ENCODE measurements at regions of chr13 and their contacts with region 1.

Region 1: GRCh38 chr13:46603165-46603603 is 50.2 kb downstream of the LRCH1 start:
- DNase-seq: no peak
- H3K4me3 ChIP-seq: no peak overlapping the region
- H3K27ac ChIP-seq: peak overlapping the region; percentile 51 to 74 (median 68)
- H3K4me1 ChIP-seq: peaks cover 87 to 100% (median 97%) of the 10 kb centered on the region in 4 donors
- H3K27me3 ChIP-seq: no peaks in the 10 kb centered on the region
- CTCF ChIP-seq: no peak
- EP300 ChIP-seq: no peak
- POLR2A ChIP-seq: no peak

Region 2: DNA sequence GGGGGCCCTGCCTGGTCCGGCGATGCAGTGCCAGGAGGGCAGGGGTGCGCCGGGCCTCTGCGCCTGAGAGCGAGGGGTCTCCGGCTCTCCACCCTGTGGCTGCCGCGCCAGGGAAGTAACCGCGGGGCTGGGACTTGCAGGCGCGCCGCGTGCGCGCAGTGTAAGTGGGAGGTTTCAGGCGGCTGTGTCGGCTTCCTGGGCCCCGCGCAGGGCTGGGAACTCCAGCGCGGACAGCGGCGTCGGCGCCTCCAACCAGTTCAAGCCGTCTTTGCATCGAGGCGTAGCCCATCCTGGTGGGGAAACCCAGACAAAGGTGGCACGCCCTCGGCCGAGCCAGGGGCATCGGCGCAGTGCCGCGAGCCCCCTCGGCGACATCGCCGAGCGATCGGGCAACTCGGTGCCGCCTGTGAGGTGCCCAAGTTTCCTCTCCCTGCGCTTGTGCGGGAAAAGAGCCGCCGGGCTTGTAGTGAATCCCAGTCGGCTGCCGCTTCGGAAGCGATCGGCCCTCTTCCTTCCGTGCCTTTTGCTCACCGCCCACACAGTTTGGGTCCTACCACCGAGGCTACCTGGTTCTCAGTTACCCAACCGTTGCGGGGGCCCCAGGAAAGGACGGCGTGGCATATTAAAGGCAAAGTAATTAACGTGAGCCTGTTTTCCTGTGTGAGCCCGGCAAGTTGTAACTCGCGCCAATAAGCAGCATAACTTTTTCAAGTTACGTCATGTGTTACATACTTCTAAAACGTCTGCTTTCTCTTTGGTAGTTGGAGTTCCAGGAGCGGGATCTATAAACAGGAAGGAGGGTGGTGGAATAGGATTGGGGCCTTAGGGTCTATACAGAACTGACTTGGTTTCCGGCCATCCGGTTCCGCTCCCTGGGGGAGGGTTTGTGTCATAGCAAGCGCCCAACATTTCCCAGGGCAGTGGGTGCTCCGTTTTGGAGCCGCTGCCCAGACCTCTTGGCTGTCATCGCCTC is 49.0 kb before region 1 on chr13:
- intact Hi-C with region 1: loop called (anchors 10 kb)
- DNase-seq: peak; percentile 71 to 92
- H3K4me3 ChIP-seq: peak overlapping the region; percentile 90 to 96 (median 94)
- H3K27ac ChIP-seq: peak overlapping the region; percentile 85 to 95 (median 95)
- H3K4me1 ChIP-seq: peaks cover 11 to 61% (median 35%) of the 10 kb centered on the region in 4 donors
- H3K27me3 ChIP-seq: no peaks in the 10 kb centered on the region
- CTCF ChIP-seq: peak in 3 of 7 experiments; percentile 21 to 33 (median 24)
- EP300 ChIP-seq: no peak
- POLR2A ChIP-seq: no peak

Measured in stomach (tissue), 19 donors.